ENCODE measurements at regions of chr12 and their contacts with region 1.

Region 1: GRCh38 chr12:100020370-100020769 is 35.6 kb upstream of the ANKS1B start:
- DNase-seq: no peak
- H3K4me3 Mint-ChIP-seq: no peak overlapping the region
- H3K27ac Mint-ChIP-seq: no peak overlapping the region
- H3K4me1 Mint-ChIP-seq: no peaks in the 10 kb centered on the region
- H3K27me3 Mint-ChIP-seq: no peaks in the 10 kb centered on the region

Region 2: DNA sequence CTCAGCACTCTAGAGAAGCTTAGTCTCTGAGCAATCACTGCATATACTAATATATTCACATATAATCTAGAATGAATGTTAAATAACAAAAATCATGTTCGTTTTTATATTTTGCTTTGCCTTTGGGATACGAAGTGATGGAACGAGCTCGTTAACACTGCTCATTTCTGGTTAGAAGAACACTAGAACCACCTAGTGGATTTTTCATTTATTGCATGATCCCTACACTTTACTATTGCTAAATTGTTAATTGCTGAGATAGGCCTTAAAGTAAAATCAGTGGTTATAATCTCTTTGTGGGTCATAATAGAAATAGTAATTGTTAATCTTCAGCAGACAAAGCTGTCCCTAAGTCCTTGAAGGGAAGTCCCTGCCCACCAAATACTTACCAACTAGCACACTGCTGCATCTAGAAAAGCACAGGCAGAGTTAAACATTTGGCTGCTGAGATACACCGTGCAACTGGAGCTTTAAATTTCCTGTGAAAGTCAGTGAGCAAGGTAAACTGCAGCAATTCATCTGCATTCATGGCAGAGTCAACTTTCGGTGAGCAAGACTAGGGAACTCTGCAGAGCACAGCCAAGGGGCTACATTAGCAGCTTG is 1021.6 kb before region 1 on chr12:
- CTCF ChIA-PET with region 1: no interaction called
- POLR2A ChIA-PET with region 1: interaction called, 11 read pairs
- DNase-seq: no peak
- H3K4me3 Mint-ChIP-seq: no peak overlapping the region
- H3K27ac Mint-ChIP-seq: no peak overlapping the region
- H3K4me1 Mint-ChIP-seq: no peaks in the 10 kb centered on the region
- H3K27me3 Mint-ChIP-seq: peaks cover 7% of the 10 kb centered on the region

Region 3: GRCh38 chr12:99948370-99948769 is 72.0 kb before region 1 on chr12:
- CTCF ChIA-PET with region 1: no interaction called
- POLR2A ChIA-PET with region 1: no interaction called
- DNase-seq: no peak
- H3K4me3 Mint-ChIP-seq: no peak overlapping the region
- H3K27ac Mint-ChIP-seq: no peak overlapping the region
- H3K4me1 Mint-ChIP-seq: no peaks in the 10 kb centered on the region
- H3K27me3 Mint-ChIP-seq: peaks cover 2% of the 10 kb centered on the region

Region 4: DNA sequence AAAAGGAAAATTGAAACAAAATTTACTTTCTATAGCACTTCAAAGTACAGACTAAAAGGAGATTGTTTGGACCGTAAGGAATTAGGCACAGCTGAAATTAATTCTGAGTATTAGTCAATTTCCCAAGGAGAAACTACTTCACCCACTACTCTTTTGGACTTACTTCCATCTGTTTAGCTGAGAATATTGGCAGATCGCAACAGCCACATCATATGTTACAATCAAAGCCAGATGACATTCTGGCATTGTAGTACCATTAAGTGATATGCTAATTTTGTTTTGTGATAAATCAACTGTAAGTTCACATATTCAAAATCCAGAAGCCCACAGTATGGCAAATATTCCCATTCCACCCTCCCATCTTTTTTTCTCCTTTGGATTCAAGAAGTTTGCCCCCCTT is 11.5 kb after region 1 on chr12:
- CTCF ChIA-PET with region 1: no interaction called
- POLR2A ChIA-PET with region 1: no interaction called
- DNase-seq: no peak
- H3K4me3 Mint-ChIP-seq: no peak overlapping the region
- H3K27ac Mint-ChIP-seq: no peak overlapping the region
- H3K4me1 Mint-ChIP-seq: no peaks in the 10 kb centered on the region
- H3K27me3 Mint-ChIP-seq: no peaks in the 10 kb centered on the region

Region 5: DNA sequence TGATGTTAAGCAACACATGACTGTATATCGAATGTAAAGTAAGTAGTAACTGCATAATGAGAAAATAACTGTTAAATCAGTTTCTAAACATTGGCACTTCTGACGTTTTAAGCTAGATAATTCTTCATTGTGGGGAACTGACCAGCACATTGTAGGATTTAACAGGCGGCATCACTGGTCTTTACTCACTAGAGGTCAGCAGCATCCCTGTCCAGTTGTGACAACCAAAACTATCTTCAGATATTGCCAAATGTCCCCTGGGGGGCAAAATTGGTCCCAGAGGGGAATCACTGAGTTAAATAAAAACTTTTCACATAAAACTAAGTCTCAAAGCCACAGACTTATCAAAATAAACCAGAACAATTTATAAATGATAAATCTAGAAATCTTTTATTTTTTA is 57.0 kb after region 1 on chr12:
- CTCF ChIA-PET with region 1: no interaction called
- POLR2A ChIA-PET with region 1: no interaction called
- DNase-seq: no peak
- H3K4me3 Mint-ChIP-seq: no peak overlapping the region
- H3K27ac Mint-ChIP-seq: no peak overlapping the region
- H3K4me1 Mint-ChIP-seq: no peaks in the 10 kb centered on the region
- H3K27me3 Mint-ChIP-seq: no peaks in the 10 kb centered on the region